ENCODE measurements at regions of chr1 and their contacts with region 1.

Region 1: DNA sequence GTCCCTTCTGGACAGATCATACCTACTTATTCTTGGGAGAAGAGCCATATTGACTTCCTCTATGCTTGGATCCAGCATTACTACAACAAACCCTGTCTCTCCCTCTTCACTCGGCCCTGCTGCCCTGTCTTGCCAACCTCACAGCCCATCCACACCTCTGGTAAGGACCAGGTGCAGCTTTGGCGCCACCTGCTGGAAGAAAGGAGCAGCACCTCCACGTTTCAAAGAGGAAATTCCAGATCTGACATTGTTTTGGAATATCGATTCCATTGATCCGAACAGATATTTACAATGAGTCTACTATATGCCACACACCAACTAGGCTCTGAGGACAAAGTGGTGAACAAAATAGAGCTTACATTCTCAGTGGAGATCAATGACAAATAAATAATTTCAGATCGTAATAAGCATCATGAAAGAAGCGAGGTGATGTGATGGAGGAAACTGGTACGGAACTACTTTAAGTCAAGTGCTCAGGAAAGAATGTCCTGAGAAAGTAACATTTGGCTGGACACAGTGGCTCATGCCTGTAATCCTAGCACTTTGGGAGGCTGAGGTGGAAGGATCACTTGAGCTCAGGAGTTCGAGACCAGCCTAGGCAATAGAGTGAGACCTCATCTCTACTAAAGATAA is 18.7 kb downstream of the MFSD2A start:
- DNase-seq: peak; percentile 85
- CTCF ChIP-seq: peak; percentile 86

Region 2: DNA sequence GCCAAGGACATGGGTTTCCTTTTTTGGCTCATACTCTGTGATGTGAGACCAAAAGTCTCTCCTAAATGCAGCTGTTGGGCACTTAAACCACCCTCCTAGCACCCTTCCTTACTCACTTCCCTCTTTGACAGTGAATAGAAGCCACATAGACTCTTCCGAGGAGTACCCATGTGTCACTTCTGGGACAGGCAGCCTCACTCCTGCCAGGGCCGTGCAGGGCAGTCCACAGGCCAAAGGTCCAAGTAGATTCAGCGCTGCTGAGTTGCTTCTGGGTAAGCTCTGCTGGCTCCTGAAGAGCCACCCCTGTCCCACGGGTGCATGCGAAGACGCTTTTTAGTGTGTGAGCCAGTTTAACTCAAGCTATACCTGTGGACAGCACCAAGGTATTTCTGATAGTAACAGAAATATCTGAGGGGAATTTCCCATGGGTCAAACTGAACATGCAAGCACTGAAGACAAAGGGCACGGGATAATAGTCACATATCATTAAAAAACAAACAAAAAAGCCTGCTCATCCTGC is 148.1 kb before region 1 on chr1:
- in situ Hi-C with region 1: loop called (anchors 10 kb)
- DNase-seq: no peak
- CTCF ChIP-seq: no peak

Measured in GM13976 (cell line).